ENCODE measurements at regions of chr20 and their contacts with region 1.

Region 1: DNA sequence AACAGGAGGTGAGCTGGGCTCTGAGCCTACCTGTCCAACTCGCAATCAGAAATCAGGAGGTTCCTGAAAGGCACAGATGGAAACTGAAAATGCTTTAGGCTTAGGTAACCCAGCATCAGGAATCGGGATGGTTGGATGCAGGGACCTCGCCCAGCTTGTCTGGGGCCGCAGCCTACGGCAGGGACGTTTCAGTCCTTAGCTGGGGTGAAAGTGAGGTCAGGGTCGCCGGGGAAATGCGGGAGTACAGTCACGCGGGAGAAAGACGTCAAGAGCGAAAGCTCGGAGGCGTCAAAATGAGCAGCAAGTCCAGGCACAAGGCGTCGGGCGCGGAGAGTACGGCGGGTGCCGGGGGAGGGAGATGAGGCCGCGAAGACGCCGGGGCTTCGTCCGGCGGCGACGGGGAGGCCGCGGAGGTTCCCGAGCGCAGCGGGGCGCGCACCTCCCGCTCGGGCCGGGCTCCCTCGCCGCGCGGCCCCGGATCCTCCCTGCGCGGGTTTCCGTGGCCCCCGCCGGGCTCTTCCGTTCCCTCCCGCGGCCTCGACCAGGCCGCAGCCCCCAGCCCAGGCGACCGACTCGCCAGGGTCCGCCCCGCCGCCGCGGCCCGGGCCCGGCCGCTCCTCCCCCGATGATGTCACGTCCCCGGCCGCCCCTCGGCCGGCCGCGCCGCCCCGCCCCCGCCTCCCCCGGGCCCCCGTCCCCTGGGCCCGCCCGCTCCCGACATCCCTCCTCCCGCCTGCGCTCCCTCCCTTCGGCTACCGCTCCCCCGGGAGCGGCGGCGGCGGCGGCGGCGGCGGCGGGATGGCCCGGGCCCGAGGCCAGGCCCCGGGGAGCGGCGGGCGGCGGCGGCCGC is at the start of gene EBF4:
- DNase-seq: peak; percentile 63
- H3K4me3 ChIP-seq: peak within 1 kb of the TSS; percentile 51 to 65
- H3K27ac ChIP-seq: peak within 1 kb of the TSS; percentile 90 to 94
- H3K4me1 ChIP-seq: peaks cover 7% of the 10 kb centered on the region
- H3K27me3 ChIP-seq: no peaks in the 10 kb centered on the region
- CTCF ChIP-seq: no peak
- POLR2A ChIP-seq: peak; percentile 70
- total RNA-seq, gene EBF4: 48.9 to 58.8 TPM

Region 2: DNA sequence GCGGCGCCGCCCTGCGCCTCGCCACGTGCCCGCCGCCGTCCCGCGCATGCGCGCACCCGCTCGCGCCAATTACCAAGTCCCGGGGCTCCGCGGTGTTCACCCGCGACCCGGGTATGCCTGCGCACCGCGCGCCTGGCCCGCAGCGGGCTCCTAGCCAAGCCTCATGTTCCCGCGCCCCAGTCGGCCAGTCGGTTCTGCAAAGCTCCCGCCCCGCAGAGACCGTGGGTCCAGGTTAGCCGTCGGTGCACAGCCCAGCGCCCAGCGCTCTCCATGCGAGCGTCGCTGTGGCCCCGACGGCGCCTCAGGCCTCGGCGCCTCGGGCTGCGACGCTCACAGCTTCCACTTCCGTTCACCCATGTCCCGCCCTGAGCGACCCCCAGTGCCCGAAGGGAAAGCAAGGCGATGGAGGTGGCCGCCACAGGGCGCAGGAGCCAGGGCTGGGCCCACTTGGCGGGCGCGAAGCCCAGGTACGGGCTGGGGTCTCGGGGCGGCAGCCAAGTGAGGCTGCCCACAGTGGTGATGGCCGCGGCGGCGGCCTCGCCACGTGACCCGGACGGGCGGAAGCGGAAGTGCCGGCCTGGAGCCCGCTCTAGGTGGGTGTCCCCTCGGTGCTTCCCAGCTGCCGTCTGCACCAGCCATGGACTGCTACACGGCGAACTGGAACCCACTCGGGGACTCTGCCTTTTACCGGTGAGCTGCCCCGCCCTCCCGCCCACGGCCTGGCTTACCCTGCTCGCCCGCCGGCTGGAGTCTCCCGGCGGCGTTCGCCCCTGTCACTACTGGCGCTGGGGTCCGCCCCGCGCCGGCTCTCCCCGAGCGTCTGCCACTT is 148.1 kb after region 1 on chr20 and contains the starts of genes PCED1A and VPS16:
- intact Hi-C with region 1: loop called (anchors 10 kb)
- DNase-seq: peak; percentile 80
- H3K4me3 ChIP-seq: peak within 1 kb of the TSS; percentile 70 to 98
- H3K27ac ChIP-seq: peak within 1 kb of the TSS; percentile 80 to 90
- H3K4me1 ChIP-seq: peaks cover 3% of the 10 kb centered on the region
- H3K27me3 ChIP-seq: no peaks in the 10 kb centered on the region
- CTCF ChIP-seq: no peak
- POLR2A ChIP-seq: peak; percentile 46
- total RNA-seq, gene PCED1A: 54.8 to 58.1 TPM
- total RNA-seq, gene VPS16: 27.5 to 37.3 TPM